CD4-positive, alpha-beta T cell (primary cell): ENCODE measurements at regions of chr12 and their contacts with region 1.

Region 1: DNA sequence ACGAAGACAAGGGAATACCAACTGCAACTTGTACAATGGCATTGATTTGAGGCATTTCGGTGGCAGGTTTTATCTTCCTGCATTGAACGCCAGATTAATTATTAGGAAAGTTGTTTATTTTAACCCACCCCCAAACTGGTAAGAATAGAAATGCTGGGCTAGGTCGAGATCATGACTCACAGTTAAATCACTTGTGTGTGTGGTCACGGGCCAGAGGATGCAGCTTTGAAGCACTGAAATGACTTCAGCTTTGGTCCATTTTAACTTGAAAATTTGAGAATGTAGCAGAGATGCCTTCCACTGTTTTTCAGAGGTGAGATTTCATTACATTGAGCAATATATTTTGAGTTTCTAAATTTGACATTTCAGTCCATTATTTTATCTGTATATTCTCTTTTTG is 23.6 kb upstream of the KCNH3 start:
- DNase-seq: no peak
- ATAC-seq: no peak
- H3K4me3 ChIP-seq: no peak overlapping the region
- H3K4me3 Mint-ChIP-seq: no peak overlapping the region
- H3K27ac ChIP-seq: no peak overlapping the region
- H3K27ac Mint-ChIP-seq: no peak overlapping the region
- H3K4me1 ChIP-seq: no peaks in the 10 kb centered on the region
- H3K4me1 Mint-ChIP-seq: no peaks in the 10 kb centered on the region
- H3K27me3 ChIP-seq: no peaks in the 10 kb centered on the region
- H3K27me3 Mint-ChIP-seq: no peaks in the 10 kb centered on the region
- CTCF ChIP-seq: no peak

Region 2: DNA sequence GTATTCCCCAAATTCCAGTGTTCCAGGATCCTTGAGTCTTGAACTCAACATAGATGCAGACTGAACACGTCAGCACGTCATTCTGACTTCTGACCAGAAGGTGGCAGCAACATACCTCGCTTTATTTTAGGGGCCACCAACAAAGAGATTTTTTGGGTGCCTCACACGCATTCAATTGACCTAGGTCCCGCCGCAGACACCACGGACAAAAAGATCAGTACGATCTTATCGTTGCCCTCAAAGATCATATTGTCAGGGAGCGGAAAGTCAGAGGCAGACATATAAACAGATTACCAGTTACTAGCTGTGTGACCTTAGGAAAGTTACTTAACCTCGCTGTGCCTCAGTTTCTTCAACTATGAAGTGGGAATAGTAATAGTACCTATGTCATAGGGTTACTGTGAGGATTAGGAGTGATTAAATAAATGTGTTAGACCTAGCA is 226.8 kb before region 1 on chr12:
- CTCF ChIA-PET with region 1: interaction called, 7 read pairs
- POLR2A ChIA-PET with region 1: no interaction called
- intact Hi-C with region 1: loop called (anchors 1 to 2 kb)
- DNase-seq: peak; percentile 50 to 86 (median 64)
- ATAC-seq: peak; percentile 76
- H3K4me3 ChIP-seq: no peak overlapping the region
- H3K4me3 Mint-ChIP-seq: no peak overlapping the region
- H3K27ac ChIP-seq: no peak overlapping the region
- H3K27ac Mint-ChIP-seq: no peak overlapping the region
- H3K4me1 ChIP-seq: no peaks in the 10 kb centered on the region
- H3K4me1 Mint-ChIP-seq: no peaks in the 10 kb centered on the region
- H3K27me3 ChIP-seq: peaks cover 2 to 23% of the 10 kb centered on the region in 2 experiments
- H3K27me3 Mint-ChIP-seq: peaks cover 44% of the 10 kb centered on the region
- CTCF ChIP-seq: peak; percentile 94

Region 3: GRCh38 chr12:49358483-49359141 is 156.7 kb before region 1 on chr12:
- CTCF ChIA-PET with region 1: interaction called, 85 read pairs
- POLR2A ChIA-PET with region 1: interaction called, 19 read pairs
- intact Hi-C with region 1: loop called (anchors 1 kb)
- DNase-seq: peak in 8 of 14 experiments; percentile 31 to 86 (median 62)
- ATAC-seq: peak; percentile 96
- H3K4me3 ChIP-seq: no peak overlapping the region
- H3K4me3 Mint-ChIP-seq: peak overlapping the region; percentile 34
- H3K27ac ChIP-seq: no peak overlapping the region
- H3K27ac Mint-ChIP-seq: no peak overlapping the region
- H3K4me1 ChIP-seq: peaks cover 3% of the 10 kb centered on the region
- H3K4me1 Mint-ChIP-seq: peaks cover 7% of the 10 kb centered on the region
- H3K27me3 ChIP-seq: peaks cover 9 to 12% of the 10 kb centered on the region in 2 experiments
- H3K27me3 Mint-ChIP-seq: peaks cover 29% of the 10 kb centered on the region
- CTCF ChIP-seq: peak; percentile 78

Region 4: DNA sequence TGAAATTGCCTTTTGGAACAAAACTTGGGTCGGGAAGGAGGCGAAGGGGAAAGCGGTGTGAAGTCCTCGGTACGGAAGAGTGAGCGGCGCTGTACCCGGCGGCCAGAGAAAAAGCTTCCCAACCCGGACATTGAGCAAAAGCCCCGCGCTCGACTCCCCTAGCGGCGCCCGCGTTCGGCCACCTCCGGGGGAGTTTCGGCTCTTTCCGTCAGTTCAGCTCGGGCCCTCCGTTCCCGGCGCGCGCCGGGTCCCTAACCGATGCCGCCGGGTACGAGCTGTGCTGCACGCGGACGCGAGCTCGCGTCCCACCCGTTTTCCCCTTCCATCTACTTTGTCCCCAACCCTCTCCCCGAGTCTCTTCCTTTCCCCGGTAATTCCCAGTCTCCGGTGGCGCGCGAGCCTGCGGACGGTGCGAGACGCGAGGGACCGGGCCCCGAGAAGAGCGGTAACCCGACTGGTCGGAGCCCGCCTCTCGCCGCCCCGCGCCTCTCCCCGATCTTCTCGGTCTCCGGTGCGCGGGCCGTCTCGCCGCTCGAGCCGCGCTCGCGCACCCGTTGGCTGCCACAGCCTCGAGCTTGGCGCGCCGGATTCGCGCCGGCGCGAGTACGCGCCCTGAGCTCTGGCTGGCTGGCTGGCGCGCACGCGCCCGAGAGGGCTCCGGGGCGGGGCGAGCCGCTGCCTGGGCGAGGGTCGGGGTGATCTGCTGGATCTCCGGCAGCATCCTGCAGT is 148.4 kb before region 1 on chr12:
- CTCF ChIA-PET with region 1: interaction called, 10 read pairs
- POLR2A ChIA-PET with region 1: interaction called, 5 read pairs
- intact Hi-C with region 1: no loop called
- DNase-seq: peak; percentile 69 to 92 (median 81)
- ATAC-seq: peak; percentile 82
- H3K4me3 ChIP-seq: peak overlapping the region; percentile 88
- H3K4me3 Mint-ChIP-seq: peak overlapping the region; percentile 99
- H3K27ac ChIP-seq: peak overlapping the region; percentile 66 to 70
- H3K27ac Mint-ChIP-seq: peak overlapping the region; percentile 76
- H3K4me1 ChIP-seq: peaks cover 15% of the 10 kb centered on the region
- H3K4me1 Mint-ChIP-seq: peaks cover 30% of the 10 kb centered on the region
- H3K27me3 ChIP-seq: no peaks in the 10 kb centered on the region
- H3K27me3 Mint-ChIP-seq: no peaks in the 10 kb centered on the region
- CTCF ChIP-seq: no peak

Region 5: GRCh38 chr12:49496417-49497360 is 18.6 kb before region 1 on chr12:
- CTCF ChIA-PET with region 1: interaction called, 11 read pairs
- POLR2A ChIA-PET with region 1: no interaction called
- intact Hi-C with region 1: no loop called
- DNase-seq: no peak
- ATAC-seq: no peak
- H3K4me3 ChIP-seq: no peak overlapping the region
- H3K4me3 Mint-ChIP-seq: no peak overlapping the region
- H3K27ac ChIP-seq: no peak overlapping the region
- H3K27ac Mint-ChIP-seq: no peak overlapping the region
- H3K4me1 ChIP-seq: no peaks in the 10 kb centered on the region
- H3K4me1 Mint-ChIP-seq: peaks cover 1% of the 10 kb centered on the region
- H3K27me3 ChIP-seq: no peaks in the 10 kb centered on the region
- H3K27me3 Mint-ChIP-seq: no peaks in the 10 kb centered on the region
- CTCF ChIP-seq: no peak

Region 6: DNA sequence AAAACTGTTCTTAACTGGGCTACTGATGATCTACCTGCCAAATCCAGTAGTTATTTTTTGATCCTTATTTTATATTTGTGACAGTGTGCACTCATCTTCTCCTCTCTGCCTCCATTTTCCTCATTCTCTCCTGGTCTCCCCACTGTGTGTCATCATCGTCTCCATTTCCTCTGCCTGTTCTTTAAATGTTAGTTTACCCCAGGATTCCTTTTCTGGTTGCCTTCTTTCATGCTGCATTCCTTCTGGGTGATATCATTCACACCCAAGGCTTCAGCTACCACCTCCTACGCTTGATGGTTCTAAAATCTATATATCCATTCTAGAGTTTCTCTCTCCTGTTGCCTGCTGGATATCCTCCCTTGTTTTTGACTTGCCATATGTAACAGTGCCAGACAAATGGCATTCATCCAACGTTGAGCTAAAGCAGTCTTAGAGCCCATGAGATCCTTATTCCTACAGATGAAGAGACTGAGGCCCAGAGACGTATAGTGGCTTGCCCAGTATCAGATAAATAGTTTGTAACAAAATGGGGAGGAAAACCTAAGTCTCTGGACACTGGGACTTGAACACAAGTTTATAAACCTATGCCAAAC is 1099.0 kb after region 1 on chr12:
- CTCF ChIA-PET with region 1: no interaction called
- POLR2A ChIA-PET with region 1: no interaction called
- intact Hi-C with region 1: no loop called
- DNase-seq: no peak
- ATAC-seq: no peak
- H3K4me3 ChIP-seq: no peak overlapping the region
- H3K4me3 Mint-ChIP-seq: no peak overlapping the region
- H3K27ac ChIP-seq: no peak overlapping the region
- H3K27ac Mint-ChIP-seq: no peak overlapping the region
- H3K4me1 ChIP-seq: peaks cover under 1% of the 10 kb centered on the region
- H3K4me1 Mint-ChIP-seq: peaks cover 40% of the 10 kb centered on the region
- H3K27me3 ChIP-seq: no peaks in the 10 kb centered on the region
- H3K27me3 Mint-ChIP-seq: no peaks in the 10 kb centered on the region
- CTCF ChIP-seq: no peak